Astrocyte of the cerebellum (primary cell): ENCODE measurements at regions of chr17 and their contacts with region 1.

Region 1: DNA sequence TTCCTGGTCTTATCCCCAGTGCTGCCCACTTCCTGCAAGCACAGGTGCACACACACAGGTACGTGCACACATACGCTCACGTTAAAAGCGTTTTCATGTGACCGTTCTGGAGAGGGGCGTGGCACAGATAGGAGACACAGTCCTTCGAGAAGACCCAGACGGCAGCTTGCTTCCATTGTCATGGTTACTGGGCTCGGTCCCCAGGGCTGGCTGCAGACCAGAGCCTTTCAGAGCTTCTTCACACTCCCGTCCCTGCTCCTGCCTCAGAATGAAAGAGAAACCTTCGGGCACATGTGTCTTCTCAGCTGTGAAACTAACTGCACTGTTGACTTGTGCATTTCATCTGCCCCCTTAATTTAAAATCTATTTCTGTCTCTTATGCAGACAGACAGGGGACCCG is 154.2 kb downstream of the PITPNC1 start:
- DNase-seq: no peak
- H3K4me3 ChIP-seq: no peak overlapping the region
- CTCF ChIP-seq: no peak

Region 2: GRCh38 chr17:67481808-67482207 is 49.5 kb before region 1 on chr17:
- in situ Hi-C with region 1: loop called (anchors 5 kb)
- DNase-seq: no peak
- H3K4me3 ChIP-seq: no peak overlapping the region
- CTCF ChIP-seq: no peak

Region 3: DNA sequence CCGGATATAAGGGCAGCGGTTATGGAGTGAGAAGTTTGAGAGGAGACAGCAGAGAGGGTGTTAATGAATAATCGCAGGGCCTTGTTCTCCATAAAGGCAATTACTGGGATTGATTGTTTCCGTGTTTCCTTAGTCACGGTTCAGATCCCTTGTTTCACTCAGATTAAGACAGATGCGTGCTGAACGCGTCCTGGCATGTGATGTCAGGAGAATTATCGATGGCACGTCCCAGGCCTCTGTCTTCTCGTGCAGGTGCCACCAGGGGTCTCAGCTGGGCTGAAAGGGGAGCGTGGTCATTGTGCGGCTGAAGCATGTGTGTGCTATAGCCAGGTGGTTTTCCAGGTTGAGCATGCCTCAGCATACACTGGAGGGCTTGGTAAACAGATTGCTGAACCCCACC is 44.0 kb after region 1 on chr17:
- in situ Hi-C with region 1: loop called (anchors 5 kb)
- DNase-seq: no peak
- H3K4me3 ChIP-seq: no peak overlapping the region
- CTCF ChIP-seq: no peak